Calu3 (cell line): ENCODE measurements at regions of chr16 and their contacts with region 1.

Region 1: GRCh38 chr16:5851393-5851982 is 753.9 kb upstream of the EEF2KMT start:
- DNase-seq: peak; percentile 44
- H3K4me3 Mint-ChIP-seq: no peak overlapping the region
- H3K27ac Mint-ChIP-seq: peak overlapping the region; percentile 19
- H3K4me1 Mint-ChIP-seq: peaks cover 24% of the 10 kb centered on the region
- H3K27me3 Mint-ChIP-seq: no peaks in the 10 kb centered on the region
- CTCF ChIP-seq: no peak

Region 2: DNA sequence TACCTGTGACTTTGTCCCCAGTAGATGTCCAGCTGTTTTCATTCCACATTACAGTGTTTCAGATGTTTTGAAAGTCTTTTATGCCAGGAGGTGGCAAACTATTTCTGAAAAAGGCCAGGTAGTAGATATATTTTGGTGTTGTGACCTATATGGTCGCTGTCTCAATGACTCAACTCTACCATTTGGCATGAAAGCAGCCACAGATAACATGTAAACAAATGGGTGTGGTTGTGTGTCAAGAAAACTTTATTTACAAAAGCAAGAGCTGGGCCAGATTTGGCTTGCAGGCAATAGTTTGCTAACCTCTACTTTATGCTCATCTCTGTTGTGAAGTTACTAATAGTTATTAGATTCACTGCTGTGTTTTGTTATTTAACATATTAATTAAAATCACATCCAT is 25.2 kb before region 1 on chr16:
- CTCF ChIA-PET with region 1: no interaction called
- intact Hi-C with region 1: no loop called
- DNase-seq: no peak
- H3K4me3 Mint-ChIP-seq: no peak overlapping the region
- H3K27ac Mint-ChIP-seq: no peak overlapping the region
- H3K4me1 Mint-ChIP-seq: no peaks in the 10 kb centered on the region
- H3K27me3 Mint-ChIP-seq: peaks cover 30% of the 10 kb centered on the region
- CTCF ChIP-seq: no peak

Region 3: DNA sequence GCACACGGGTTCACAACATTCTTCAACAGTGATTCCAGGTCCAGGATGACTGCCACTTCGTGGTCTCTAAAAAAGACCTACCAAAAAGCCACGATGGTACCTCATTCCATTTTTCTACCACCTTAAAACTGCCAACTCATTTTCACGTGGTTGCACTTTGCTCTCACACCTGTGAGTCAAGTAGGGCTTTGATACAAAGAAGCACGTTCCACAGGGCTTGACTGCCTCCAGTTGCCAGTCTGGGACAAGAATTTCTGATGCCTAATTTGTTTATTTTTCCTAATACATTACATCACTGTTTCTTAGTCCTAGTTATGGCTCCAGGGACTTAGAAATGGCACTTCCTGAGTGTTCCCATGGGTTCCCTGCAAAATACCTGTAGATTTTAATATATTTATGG is 157.7 kb after region 1 on chr16:
- CTCF ChIA-PET with region 1: no interaction called
- intact Hi-C with region 1: loop called (anchors 10 kb)
- DNase-seq: no peak
- H3K4me3 Mint-ChIP-seq: no peak overlapping the region
- H3K27ac Mint-ChIP-seq: no peak overlapping the region
- H3K4me1 Mint-ChIP-seq: peaks cover 16% of the 10 kb centered on the region
- H3K27me3 Mint-ChIP-seq: peaks cover 39% of the 10 kb centered on the region
- CTCF ChIP-seq: no peak

Region 4: DNA sequence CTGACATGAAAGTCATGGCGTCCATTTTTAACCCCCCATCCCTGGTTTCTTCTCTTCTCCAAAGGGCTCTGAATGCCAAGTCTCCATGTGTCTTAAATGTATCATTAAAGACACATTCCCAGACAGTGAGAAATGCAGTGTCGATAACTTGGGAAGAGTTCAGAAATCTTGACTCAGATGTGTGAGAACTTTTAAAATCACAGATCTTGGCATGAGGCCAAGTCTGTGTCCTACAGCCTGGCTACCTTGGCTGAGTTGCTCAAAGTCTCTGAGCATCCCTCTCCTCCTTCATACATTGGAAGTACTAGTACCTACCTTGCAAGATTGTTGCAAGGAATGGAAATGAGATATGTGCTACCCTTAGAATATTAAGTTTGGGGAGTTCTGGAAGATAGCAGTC is 434.7 kb after region 1 on chr16:
- CTCF ChIA-PET with region 1: no interaction called
- intact Hi-C with region 1: no loop called
- DNase-seq: no peak
- H3K4me3 Mint-ChIP-seq: no peak overlapping the region
- H3K27ac Mint-ChIP-seq: no peak overlapping the region
- H3K4me1 Mint-ChIP-seq: no peaks in the 10 kb centered on the region
- H3K27me3 Mint-ChIP-seq: no peaks in the 10 kb centered on the region
- CTCF ChIP-seq: no peak